ENCODE measurements at regions of chr7 and their contacts with region 1.

Region 1: GRCh38 chr7:82067628-82068261 is 297.9 kb upstream of the HGF start:
- DNase-seq: no peak
- ATAC-seq: peak; percentile 64
- H3K4me3 ChIP-seq: no peak overlapping the region
- H3K27ac ChIP-seq: no peak overlapping the region
- H3K4me1 ChIP-seq: peaks cover 5% of the 10 kb centered on the region; the same call in 1 of the 2 replicates
- H3K27me3 ChIP-seq: 0 out of 2 replicates have a peak, but pooled peaks cover 5% of the 10 kb centered on the region
- CTCF ChIP-seq: no peak

Region 2: DNA sequence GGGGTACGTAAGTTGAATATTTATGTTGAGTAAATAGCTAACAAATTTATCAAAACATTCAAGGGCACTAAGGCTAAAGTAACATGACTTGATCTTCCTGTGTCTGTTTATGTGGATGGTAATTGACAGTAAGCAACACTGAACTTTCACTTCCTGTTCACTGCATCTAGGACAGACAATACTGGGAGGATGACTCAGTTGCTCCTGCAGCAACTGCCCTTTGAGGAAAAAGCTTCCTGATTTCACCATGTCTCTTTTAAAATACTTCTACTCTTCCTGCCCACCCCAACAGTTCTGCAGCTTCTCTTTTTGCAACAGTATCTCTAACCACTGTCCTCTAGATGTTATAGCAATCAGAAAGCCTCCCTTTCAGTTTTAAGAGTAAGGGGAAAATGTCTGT is 221.3 kb before region 1 on chr7:
- CTCF ChIA-PET with region 1: no interaction called
- POLR2A ChIA-PET with region 1: no interaction called
- intact Hi-C with region 1: no loop called
- DNase-seq: no peak
- ATAC-seq: peak; percentile 38; the same call in 1 of the 2 replicates
- H3K4me3 ChIP-seq: no peak overlapping the region
- H3K27ac ChIP-seq: no peak overlapping the region
- H3K4me1 ChIP-seq: no peaks in the 10 kb centered on the region
- H3K27me3 ChIP-seq: no peaks in the 10 kb centered on the region
- CTCF ChIP-seq: no peak

Region 3: GRCh38 chr7:82049891-82050533 is 17.7 kb before region 1 on chr7:
- CTCF ChIA-PET with region 1: no interaction called
- POLR2A ChIA-PET with region 1: no interaction called
- intact Hi-C with region 1: loop called (anchors 2 kb)
- DNase-seq: peak; percentile 94
- ATAC-seq: peak; percentile 94
- H3K4me3 ChIP-seq: peak overlapping the region; percentile 39; the same call in 1 of the 2 replicates
- H3K27ac ChIP-seq: peak overlapping the region; percentile 93
- H3K4me1 ChIP-seq: peaks cover 28% of the 10 kb centered on the region
- H3K27me3 ChIP-seq: no peaks in the 10 kb centered on the region
- CTCF ChIP-seq: no peak

Region 4: GRCh38 chr7:82105463-82105862 is 37.7 kb after region 1 on chr7:
- CTCF ChIA-PET with region 1: no interaction called
- POLR2A ChIA-PET with region 1: interaction called, 7 read pairs
- intact Hi-C with region 1: loop called (anchors 5 kb)
- DNase-seq: peak; percentile 80
- ATAC-seq: peak; percentile 82
- H3K4me3 ChIP-seq: no peak overlapping the region
- H3K27ac ChIP-seq: peak overlapping the region; percentile 75
- H3K4me1 ChIP-seq: peaks cover 21% of the 10 kb centered on the region
- H3K27me3 ChIP-seq: no peaks in the 10 kb centered on the region
- CTCF ChIP-seq: no peak

Region 5: DNA sequence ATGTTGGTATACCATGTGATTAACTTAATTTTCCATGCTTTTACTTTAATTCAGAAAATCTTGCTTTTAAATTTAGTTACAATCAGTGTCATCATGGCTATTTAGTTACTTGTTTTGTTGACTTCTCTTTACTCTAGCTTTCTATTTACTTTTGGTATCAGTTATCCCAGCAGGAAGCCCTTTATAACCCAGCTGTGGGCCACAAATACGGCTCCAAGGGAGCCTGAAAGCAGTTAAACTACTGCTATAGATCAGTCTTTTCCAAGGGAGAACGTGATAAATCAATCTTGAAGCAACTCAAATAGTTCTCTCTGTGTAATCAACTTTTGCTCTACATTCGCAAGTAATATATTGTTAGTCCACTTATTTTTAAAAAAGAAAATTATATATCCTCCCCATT is 88.4 kb after region 1 on chr7:
- CTCF ChIA-PET with region 1: no interaction called
- POLR2A ChIA-PET with region 1: no interaction called
- intact Hi-C with region 1: loop called (anchors 5 kb)
- DNase-seq: no peak
- ATAC-seq: no peak
- H3K4me3 ChIP-seq: no peak overlapping the region
- H3K27ac ChIP-seq: no peak overlapping the region
- H3K4me1 ChIP-seq: no peaks in the 10 kb centered on the region; the same call in 1 of the 2 replicates
- H3K27me3 ChIP-seq: peaks cover 18% of the 10 kb centered on the region; the same call in 1 of the 2 replicates
- CTCF ChIP-seq: no peak

Measured in PC-3 (cell line).